Sigmoid colon (tissue), 7 donors: ENCODE measurements at regions of chr11 and their contacts with region 1.

Region 1: GRCh38 chr11:85627998-85628770 is at the start of gene TMEM126B:
- DNase-seq: peak; percentile 99
- H3K4me3 ChIP-seq: peak within 1 kb of the TSS; percentile 58 to 90 (median 68)
- H3K27ac ChIP-seq: peak within 1 kb of the TSS; percentile 88 to 98 (median 96)
- H3K4me1 ChIP-seq: peaks cover 0 to 30% (median 27%) of the 10 kb centered on the region in 4 donors
- H3K27me3 ChIP-seq: no peaks in the 10 kb centered on the region
- CTCF ChIP-seq: no peak
- EP300 ChIP-seq: peak in 1 of 4 donors; percentile 27
- POLR2A ChIP-seq: peak; percentile 69 to 81
- total RNA-seq, gene TMEM126B: 39.3 to 87.5 (median 68.7) TPM

Region 2: GRCh38 chr11:85249482-85249881 is 378.7 kb before region 1 on chr11:
- intact Hi-C with region 1: no loop called
- DNase-seq: no peak
- H3K4me3 ChIP-seq: no peak overlapping the region
- H3K27ac ChIP-seq: no peak overlapping the region
- H3K4me1 ChIP-seq: no peaks in the 10 kb centered on the region
- H3K27me3 ChIP-seq: no peaks in the 10 kb centered on the region
- CTCF ChIP-seq: no peak
- EP300 ChIP-seq: no peak
- POLR2A ChIP-seq: no peak

Region 3: GRCh38 chr11:85647604-85648299 is 19.6 kb after region 1 on chr11 and contains the start of gene TMEM126A:
- intact Hi-C with region 1: loop called (anchors 2 kb)
- DNase-seq: peak; percentile 93
- H3K4me3 ChIP-seq: peak within 1 kb of the TSS; percentile 54 to 70 (median 64)
- H3K27ac ChIP-seq: peak within 1 kb of the TSS; percentile 76 to 83 (median 80)
- H3K4me1 ChIP-seq: peaks cover 0 to 24% (median 16%) of the 10 kb centered on the region in 4 donors
- H3K27me3 ChIP-seq: no peaks in the 10 kb centered on the region
- CTCF ChIP-seq: no peak
- EP300 ChIP-seq: peak in 1 of 4 donors; percentile 23
- POLR2A ChIP-seq: peak; percentile 45 to 61
- total RNA-seq, gene TMEM126A: 21.0 to 45.1 (median 38.1) TPM

Region 4: DNA sequence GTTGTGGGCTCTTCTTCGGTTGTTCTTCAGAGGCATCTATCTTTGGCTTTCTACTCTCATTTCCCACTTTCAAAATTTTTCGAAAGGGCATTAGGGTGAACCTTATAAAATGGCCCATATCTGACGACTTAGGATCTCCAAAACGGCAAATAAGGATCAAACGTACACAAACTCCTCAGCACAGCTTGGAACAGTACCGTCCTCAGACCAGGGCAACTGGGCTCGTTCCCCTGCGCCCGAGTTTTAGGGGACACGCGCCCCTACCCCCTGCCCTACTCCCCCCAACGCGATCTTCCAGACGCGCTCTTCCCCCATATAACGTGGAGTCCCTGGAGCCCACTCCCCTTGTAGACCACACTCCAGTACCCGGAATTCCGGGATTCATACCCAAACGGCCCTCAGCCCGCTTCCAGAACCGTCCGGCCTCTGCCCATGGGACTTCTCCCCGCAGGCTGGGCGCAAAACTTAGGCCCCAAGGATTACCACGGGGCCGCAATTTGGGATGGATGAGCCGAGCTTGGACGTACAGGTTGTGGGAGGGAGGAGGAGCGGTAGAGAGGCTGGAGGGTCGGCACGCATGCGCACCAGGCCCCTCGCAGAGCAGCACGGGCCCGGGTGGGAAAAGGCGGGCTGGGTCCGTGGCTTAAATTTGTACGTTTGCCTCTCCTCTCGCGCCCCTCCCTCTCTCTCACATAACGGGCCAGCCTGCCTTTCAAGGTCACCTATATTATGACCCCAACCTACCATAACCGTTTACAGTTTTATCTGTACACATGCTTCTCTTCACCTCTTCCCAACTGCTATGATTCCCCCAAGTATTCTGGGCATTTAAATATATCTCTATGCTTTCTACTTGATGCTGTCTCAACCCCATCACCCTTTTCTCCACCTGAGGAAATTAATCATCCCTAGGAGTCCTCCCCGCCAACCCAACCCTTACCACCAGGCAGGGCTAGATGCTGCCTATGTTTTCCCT is 54.4 kb after region 1 on chr11:
- intact Hi-C with region 1: loop called (anchors 5 kb)
- DNase-seq: peak; percentile 84
- H3K4me3 ChIP-seq: peak overlapping the region; percentile 46 to 65 (median 63)
- H3K27ac ChIP-seq: peak overlapping the region; percentile 32 to 66 (median 60)
- H3K4me1 ChIP-seq: peaks cover 0 to 21% (median 12%) of the 10 kb centered on the region in 4 donors
- H3K27me3 ChIP-seq: no peaks in the 10 kb centered on the region
- CTCF ChIP-seq: no peak
- EP300 ChIP-seq: no peak
- POLR2A ChIP-seq: no peak

Region 5: DNA sequence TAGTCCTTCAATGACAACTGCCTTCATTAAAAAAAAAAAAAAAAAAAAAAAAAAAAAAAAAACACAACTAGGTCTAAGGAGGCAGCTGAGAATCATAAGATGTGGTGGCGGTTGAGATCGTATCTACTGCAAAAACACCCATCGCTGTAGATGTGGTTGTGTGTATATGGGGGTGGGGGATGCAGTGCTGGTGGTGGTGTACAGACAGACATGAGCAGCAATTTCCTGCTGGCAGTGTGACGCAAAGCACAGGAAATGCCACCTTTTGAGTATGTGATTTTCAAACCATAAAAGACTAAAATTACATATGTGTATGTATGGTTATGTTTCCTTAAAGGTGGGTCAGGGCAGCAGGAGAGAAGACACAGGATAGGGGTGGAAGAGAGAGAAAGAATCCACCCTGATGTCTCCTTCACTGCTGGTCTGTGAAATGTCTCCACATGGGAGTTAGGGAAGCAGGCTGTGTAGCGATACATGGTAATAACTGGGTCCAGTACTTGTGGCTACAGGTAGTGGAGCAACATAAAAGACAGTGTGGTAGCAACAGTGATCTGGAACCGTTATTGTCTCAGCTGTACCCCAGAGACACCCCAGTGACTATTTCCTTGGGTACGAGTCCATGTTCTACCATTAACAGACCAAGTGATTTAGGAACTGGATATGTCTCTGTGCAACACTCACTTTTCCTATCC is 124.9 kb after region 1 on chr11:
- intact Hi-C with region 1: no loop called
- DNase-seq: no peak
- H3K4me3 ChIP-seq: no peak overlapping the region
- H3K27ac ChIP-seq: no peak overlapping the region
- H3K4me1 ChIP-seq: no peaks in the 10 kb centered on the region
- H3K27me3 ChIP-seq: no peaks in the 10 kb centered on the region
- CTCF ChIP-seq: no peak
- EP300 ChIP-seq: no peak
- POLR2A ChIP-seq: no peak

Region 6: DNA sequence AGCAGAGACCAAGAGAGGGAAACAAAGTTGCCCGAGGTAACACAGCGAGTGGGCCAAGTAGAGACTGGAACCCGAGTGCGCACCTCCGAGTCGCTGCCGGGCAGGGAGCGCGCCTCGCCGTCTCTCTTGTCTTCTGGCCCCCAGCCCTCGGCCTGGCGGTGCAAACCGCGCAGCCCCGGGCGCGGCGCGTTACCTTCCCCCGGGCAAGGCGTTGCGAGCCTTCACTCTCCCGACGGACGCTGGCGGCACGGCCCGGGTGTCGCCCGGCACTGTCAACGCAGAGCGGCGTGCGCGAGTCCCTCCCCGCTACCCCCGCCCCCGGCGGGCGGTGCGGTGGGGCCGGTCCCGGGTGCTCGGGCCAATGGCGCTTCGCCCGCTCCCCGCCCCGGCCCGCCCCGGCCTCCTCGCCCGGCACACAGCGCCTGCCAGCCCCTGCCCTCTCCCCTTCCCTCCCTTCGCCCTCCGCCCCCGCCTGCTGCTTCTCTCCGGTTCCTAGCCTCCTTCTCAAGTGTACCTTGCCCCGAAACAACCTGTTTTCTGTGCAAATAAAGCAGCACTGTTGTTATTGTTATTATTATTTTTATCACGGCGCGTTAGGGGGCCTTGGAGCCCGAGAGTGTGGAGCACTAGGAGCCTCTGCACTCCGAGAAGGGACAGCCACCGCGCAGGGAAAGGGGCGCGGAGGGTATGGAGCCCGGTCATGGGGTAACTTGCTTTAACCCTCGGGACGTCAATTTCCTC is 182.9 kb after region 1 on chr11 and contains the start of gene SYTL2:
- intact Hi-C with region 1: no loop called
- DNase-seq: peak; percentile 73
- H3K4me3 ChIP-seq: peak within 1 kb of the TSS; percentile 39 to 62 (median 60)
- H3K27ac ChIP-seq: peak within 1 kb of the TSS in 2 of 4 donors; percentile 40 to 63
- H3K4me1 ChIP-seq: peaks cover 0 to 16% (median 7%) of the 10 kb centered on the region in 4 donors
- H3K27me3 ChIP-seq: no peaks in the 10 kb centered on the region
- CTCF ChIP-seq: no peak
- EP300 ChIP-seq: no peak
- POLR2A ChIP-seq: peak in 1 of 2 donors; percentile 60
- total RNA-seq, gene SYTL2: 9.0 to 30.2 (median 11.9) TPM

Region 7: DNA sequence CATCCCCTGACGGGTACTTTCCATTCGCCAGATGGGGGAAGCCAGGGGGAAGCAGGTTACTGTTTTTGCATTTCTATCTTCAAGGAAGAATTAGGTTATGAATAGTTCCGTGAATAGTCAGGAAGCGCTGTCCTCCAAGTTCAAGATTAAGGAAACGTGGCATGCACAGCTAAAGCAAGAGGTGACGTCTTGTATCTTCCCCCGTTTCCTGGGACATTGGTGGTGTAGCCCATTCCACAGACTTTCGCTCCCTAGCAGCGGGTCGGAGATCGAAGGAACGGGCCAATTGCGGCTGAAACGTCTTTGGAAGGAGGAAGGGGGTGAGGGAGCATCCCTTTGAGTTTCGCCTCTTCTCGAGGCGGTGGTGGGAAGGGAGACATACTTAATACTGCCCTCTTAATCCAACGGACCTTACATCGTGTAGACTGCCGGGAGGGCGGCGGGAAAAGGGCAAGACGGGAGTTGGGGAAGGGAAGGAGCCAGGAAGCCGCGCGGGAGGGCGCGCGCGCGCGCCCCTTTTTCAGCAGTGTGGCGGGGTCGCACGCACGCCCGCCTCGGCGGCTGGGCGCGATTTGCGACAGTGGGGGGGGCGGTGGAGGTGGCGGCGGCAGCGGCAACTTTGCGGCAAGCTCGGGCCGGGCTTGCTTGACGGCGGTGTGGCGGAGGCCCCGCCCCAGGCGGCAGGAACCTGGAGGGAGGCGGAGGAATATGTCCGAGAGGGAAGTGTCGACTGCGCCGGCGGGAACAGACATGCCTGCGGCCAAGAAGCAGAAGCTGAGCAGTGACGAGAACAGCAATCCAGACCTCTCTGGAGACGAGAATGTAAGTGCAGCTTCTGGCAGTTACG is 616.6 kb after region 1 on chr11 and contains the start of gene EED:
- intact Hi-C with region 1: loop called (anchors 1 kb)
- DNase-seq: peak; percentile 97
- H3K4me3 ChIP-seq: peak within 1 kb of the TSS; percentile 68 to 96 (median 75)
- H3K27ac ChIP-seq: peak within 1 kb of the TSS; percentile 95 to 100 (median 98)
- H3K4me1 ChIP-seq: peaks cover 0 to 42% (median 31%) of the 10 kb centered on the region in 4 donors
- H3K27me3 ChIP-seq: no peaks in the 10 kb centered on the region
- CTCF ChIP-seq: no peak
- EP300 ChIP-seq: no peak
- POLR2A ChIP-seq: peak; percentile 29 to 46
- total RNA-seq, gene EED: 18.2 to 28.6 (median 23.5) TPM